ENCODE measurements at regions of chr15 and their contacts with region 1.

Region 1: GRCh38 chr15:33292717-33293307 is 18.0 kb upstream of the RYR3 start:
- DNase-seq: peak; percentile 77
- ATAC-seq: no peak
- H3K4me3 Mint-ChIP-seq: no peak overlapping the region
- H3K27ac Mint-ChIP-seq: no peak overlapping the region
- H3K4me1 Mint-ChIP-seq: no peaks in the 10 kb centered on the region
- H3K27me3 Mint-ChIP-seq: no peaks in the 10 kb centered on the region

Region 2: GRCh38 chr15:33430577-33430976 is 137.8 kb after region 1 on chr15:
- CTCF ChIA-PET with region 1: no interaction called
- POLR2A ChIA-PET with region 1: no interaction called
- intact Hi-C with region 1: no loop called
- DNase-seq: no peak
- ATAC-seq: no peak
- H3K4me3 Mint-ChIP-seq: no peak overlapping the region
- H3K27ac Mint-ChIP-seq: no peak overlapping the region
- H3K4me1 Mint-ChIP-seq: no peaks in the 10 kb centered on the region
- H3K27me3 Mint-ChIP-seq: peaks cover 2% of the 10 kb centered on the region

Region 3: DNA sequence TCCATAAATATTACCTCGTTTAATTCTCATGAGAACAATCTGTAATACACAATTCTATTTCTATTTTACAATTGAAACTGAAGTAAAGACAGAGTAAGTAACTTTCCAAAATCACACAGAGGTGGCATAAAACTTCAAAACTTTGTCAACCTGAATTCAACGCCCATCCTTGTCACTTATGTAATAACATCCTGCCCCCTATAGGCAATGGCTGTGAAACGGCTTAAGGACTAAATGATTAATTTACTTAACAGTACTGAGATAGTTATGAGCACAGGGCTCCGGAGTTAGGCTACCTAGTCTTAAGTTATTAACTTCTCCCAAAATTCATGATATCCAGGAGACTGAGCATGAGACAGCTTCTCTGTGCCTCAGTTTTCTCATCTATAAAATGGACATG is 382.4 kb after region 1 on chr15:
- CTCF ChIA-PET with region 1: no interaction called
- POLR2A ChIA-PET with region 1: no interaction called
- intact Hi-C with region 1: loop called in 1 of 2 experiments (anchors 2 kb)
- DNase-seq: peak; percentile 18
- ATAC-seq: no peak
- H3K4me3 Mint-ChIP-seq: no peak overlapping the region
- H3K27ac Mint-ChIP-seq: no peak overlapping the region
- H3K4me1 Mint-ChIP-seq: no peaks in the 10 kb centered on the region
- H3K27me3 Mint-ChIP-seq: peaks cover 19% of the 10 kb centered on the region

Region 4: GRCh38 chr15:33729653-33730052 is 436.8 kb after region 1 on chr15:
- CTCF ChIA-PET with region 1: interaction called, 18 read pairs
- POLR2A ChIA-PET with region 1: no interaction called
- intact Hi-C with region 1: loop called in 1 of 2 experiments (anchors 2 kb)
- DNase-seq: no peak
- ATAC-seq: no peak
- H3K4me3 Mint-ChIP-seq: no peak overlapping the region
- H3K27ac Mint-ChIP-seq: no peak overlapping the region
- H3K4me1 Mint-ChIP-seq: no peaks in the 10 kb centered on the region
- H3K27me3 Mint-ChIP-seq: no peaks in the 10 kb centered on the region

Region 5: GRCh38 chr15:34038023-34038870 is 745.4 kb after region 1 on chr15:
- CTCF ChIA-PET with region 1: no interaction called
- POLR2A ChIA-PET with region 1: no interaction called
- intact Hi-C with region 1: no loop called
- DNase-seq: peak; percentile 88
- ATAC-seq: peak; percentile 76
- H3K4me3 Mint-ChIP-seq: peak overlapping the region; percentile 81
- H3K27ac Mint-ChIP-seq: peak overlapping the region; percentile 96
- H3K4me1 Mint-ChIP-seq: peaks cover 23% of the 10 kb centered on the region
- H3K27me3 Mint-ChIP-seq: no peaks in the 10 kb centered on the region

Measured in activated CD4-positive, alpha-beta T cell treated with anti-CD3 and anti-CD28 coated beads for 36 hours (primary cell).